Ascending aorta (tissue), 2 donors: ENCODE measurements at regions of chr2 and their contacts with region 1.

Region 1: DNA sequence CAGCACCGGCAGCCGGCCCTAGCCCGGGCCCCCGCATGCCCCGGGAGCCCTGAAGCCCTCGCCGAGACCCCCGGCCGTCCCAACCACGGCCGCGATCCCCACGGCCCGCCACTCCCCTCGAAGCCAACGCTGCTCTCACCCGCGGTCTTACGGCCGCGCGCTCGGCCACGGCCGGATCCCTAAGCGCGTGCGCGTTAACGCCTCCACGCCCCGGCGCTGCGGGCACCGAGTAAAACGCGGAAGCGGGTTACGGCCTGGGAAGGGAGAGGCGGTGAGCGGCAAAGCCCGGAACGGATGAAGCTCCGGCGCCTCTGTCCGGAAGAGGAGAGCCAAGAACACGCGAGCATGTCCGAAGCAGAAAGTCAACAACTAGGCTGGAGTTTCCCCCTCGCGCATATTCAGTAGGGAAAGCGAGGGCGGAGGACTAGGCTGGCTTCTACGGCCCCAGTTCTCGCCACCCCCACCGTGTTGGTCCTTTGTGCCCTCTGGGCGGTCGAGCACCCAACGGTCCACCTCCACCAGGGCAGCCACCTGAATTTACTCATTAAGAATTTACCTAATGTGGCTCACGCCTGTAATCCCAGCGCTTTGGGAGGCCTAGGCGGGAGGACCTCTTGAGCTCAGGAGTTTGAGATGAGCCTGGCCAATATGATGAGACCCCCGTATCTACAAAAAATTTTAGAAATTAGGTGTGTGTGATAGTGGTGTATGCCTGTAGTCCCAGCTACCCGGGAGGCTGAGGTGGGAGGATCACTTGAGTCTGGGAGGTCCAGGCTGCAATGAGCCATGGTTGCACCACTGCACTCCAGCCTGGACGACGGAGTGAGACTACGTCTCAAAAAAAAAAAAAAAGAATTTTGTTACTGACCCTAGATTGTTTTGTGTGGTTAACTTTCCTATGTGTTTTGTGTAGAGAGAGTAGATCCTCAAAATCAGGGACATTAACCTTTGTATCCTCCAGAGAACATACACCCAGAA is at the start of gene KANSL3:
- DNase-seq: peak; percentile 38 to 93
- H3K4me3 ChIP-seq: peak within 1 kb of the TSS; percentile 85 to 89
- H3K27ac ChIP-seq: peak within 1 kb of the TSS; percentile 95 to 99
- H3K4me1 ChIP-seq: peaks cover 4 to 21% of the 10 kb centered on the region in 2 donors
- H3K27me3 ChIP-seq: no peaks in the 10 kb centered on the region
- CTCF ChIP-seq: peak in 2 of 3 experiments; percentile 10 to 19
- total RNA-seq, gene KANSL3: 56.1 TPM

Region 2: DNA sequence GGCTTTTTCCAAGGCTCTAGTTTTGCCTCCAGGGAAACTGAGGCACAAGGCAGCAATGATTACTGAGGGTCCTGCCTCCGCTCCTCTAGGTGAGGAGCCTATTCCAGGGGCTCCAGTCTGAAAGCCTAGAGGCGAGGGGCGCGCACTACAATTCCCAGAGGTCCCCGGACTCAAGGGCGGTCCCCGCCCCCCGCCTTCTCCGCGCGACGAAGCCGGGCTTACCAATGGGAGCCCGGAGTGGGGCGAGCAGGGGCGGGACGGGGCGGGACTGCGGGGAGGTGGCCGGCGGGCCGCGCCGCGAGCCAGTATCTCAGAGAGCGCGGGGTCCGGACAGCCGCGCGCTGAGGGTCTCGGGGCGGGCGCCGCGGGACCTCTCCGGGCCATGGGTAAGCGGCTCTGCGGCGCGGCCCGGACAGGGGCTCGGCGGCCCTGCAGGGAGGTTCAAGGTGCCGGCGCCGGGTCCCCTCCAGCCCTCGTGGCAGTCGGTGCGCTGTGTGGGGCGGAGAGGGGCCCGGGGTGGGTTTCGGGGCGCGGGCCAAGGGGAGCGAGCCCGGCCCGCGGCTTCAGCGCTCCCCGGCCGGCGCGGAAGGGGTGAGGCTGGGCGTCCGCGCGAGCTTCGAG is 101.9 kb before region 1 on chr2 and contains the start of gene ARID5A:
- intact Hi-C with region 1: loop called (anchors 5 kb)
- DNase-seq: peak; percentile 87 to 98
- H3K4me3 ChIP-seq: peak within 1 kb of the TSS; percentile 83 to 99
- H3K27ac ChIP-seq: peak within 1 kb of the TSS; percentile 96 to 99
- H3K4me1 ChIP-seq: peaks cover 28 to 66% of the 10 kb centered on the region in 2 donors
- H3K27me3 ChIP-seq: no peaks in the 10 kb centered on the region
- CTCF ChIP-seq: peak; percentile 40 to 47 (median 46)
- total RNA-seq, gene ARID5A: 267 TPM

Region 3: DNA sequence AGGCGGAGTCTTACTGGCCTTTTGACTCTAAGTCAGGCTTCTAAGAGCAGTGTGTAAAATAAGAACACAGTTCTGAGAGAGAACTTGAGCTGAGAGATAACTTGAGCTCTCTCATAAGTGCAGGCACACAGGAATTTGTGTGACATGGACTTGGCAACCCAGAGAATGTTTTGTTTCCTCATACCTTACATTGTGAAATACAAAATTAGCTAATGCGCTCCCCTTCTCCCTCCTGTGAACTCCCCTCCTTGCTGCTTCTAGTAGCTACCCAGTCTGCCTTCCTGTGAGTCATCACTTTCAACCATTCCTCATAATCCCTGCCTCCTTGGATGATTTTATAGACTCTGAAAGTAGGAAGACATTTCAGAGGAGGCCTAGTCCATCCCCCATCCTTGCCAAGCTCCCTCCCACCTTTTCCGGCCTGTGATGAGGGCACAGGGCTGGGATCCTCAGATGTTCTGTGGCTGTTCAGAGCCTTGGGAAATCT is 26.7 kb after region 1 on chr2:
- intact Hi-C with region 1: loop called (anchors 1 kb)
- DNase-seq: peak in 1 of 2 donors; percentile 85
- H3K4me3 ChIP-seq: no peak overlapping the region
- H3K27ac ChIP-seq: peak overlapping the region; percentile 87 to 92
- H3K4me1 ChIP-seq: peaks cover 8 to 12% of the 10 kb centered on the region in 2 donors
- H3K27me3 ChIP-seq: no peaks in the 10 kb centered on the region
- CTCF ChIP-seq: no peak

Region 4: GRCh38 chr2:96760036-96760985 is 121.9 kb after region 1 on chr2 and contains the start of gene CNNM4:
- intact Hi-C with region 1: loop called (anchors 1 kb)
- DNase-seq: peak; percentile 79 to 97
- H3K4me3 ChIP-seq: peak within 1 kb of the TSS; percentile 64 to 94
- H3K27ac ChIP-seq: peak within 1 kb of the TSS; percentile 64 to 87
- H3K4me1 ChIP-seq: peaks cover 10 to 20% of the 10 kb centered on the region in 2 donors
- H3K27me3 ChIP-seq: no peaks in the 10 kb centered on the region
- CTCF ChIP-seq: no peak
- total RNA-seq, gene CNNM4: 2.7 TPM